Mammary epithelial cell (primary cell): ENCODE measurements at regions of chr21 and their contacts with region 1.

Region 1: GRCh38 chr21:26288026-26288425 is 117.5 kb upstream of the APP start:
- DNase-seq: no peak
- H3K4me3 ChIP-seq: no peak overlapping the region
- H3K27ac ChIP-seq: no peak overlapping the region
- H3K4me1 ChIP-seq: no peaks in the 10 kb centered on the region
- H3K27me3 ChIP-seq: no peaks in the 10 kb centered on the region
- CTCF ChIP-seq: no peak

Region 2: DNA sequence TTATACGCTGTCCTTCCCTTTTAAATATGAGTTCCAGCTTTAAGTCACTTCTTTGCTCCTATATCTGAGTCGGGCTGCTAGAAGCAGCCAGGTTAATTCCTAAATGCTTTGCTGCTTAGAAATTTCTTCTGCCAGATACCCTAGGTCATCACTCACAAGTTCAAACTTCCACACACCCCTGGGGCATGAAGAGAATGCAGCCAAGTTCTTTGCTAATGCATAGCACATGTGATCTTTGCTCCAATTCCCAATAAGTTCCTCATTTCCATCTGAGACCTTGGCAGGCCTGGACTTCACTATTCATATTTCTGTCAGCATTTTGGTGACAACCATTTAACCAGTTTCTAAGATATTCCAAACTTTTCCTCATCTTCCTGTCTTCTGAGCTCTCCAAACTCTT is 103.0 kb before region 1 on chr21:
- CTCF ChIA-PET with region 1: no interaction called
- dilution Hi-C with region 1: loop called (anchors 5 kb)
- in situ Hi-C with region 1: no loop called
- intact Hi-C with region 1: no loop called
- DNase-seq: no peak
- H3K4me3 ChIP-seq: no peak overlapping the region
- H3K27ac ChIP-seq: no peak overlapping the region
- H3K4me1 ChIP-seq: no peaks in the 10 kb centered on the region
- H3K27me3 ChIP-seq: no peaks in the 10 kb centered on the region
- CTCF ChIP-seq: no peak

Region 3: GRCh38 chr21:26245428-26245827 is 42.6 kb before region 1 on chr21:
- CTCF ChIA-PET with region 1: no interaction called
- dilution Hi-C with region 1: loop called (anchors 5 kb)
- in situ Hi-C with region 1: no loop called
- intact Hi-C with region 1: no loop called
- DNase-seq: no peak
- H3K4me3 ChIP-seq: no peak overlapping the region
- H3K27ac ChIP-seq: no peak overlapping the region
- H3K4me1 ChIP-seq: no peaks in the 10 kb centered on the region
- H3K27me3 ChIP-seq: no peaks in the 10 kb centered on the region
- CTCF ChIP-seq: no peak